ENCODE measurements at regions of chr5 and their contacts with region 1.

Region 1: DNA sequence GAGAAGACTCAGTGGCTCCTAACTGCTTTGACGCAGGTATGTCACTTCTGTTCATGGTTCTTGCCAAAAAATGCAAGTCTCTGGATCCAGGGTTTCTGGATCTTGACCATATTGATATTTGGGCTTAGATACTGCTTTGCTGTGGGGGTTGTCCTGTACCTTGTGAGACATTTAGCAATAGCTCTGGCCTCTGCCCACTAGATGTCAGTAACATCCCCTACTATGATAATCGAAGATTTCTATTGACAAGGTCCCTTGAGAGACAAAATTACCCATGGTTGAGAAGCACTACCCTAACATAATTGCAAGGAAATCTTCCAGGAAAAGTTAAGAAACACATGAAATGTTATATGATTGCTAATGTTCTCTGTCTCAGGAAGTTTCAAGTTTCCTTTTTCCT is 285.4 kb downstream of the TMEM232 start:
- DNase-seq: no peak
- ATAC-seq: no peak

Region 2: DNA sequence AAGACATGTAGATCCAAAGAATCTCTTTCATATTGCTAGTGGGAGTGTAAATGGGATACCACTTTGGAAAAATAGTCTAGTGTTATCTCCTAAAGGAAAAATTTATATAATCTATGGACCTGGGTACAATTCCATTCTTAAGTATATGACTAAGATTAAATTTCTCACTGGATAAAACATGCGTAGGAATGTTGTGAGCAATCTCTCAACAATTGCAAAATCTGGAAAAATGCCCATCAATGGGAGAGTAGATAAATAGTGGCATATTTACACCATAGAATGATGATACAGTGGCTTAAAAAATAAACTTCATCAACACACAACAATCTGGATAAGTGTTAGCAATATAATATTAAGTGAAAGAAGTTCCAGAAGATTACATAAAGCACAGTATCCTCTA is 281.8 kb before region 1 on chr5:
- intact Hi-C with region 1: no loop called
- DNase-seq: no peak
- ATAC-seq: no peak

Region 3: GRCh38 chr5:110510146-110510545 is 69.1 kb after region 1 on chr5:
- intact Hi-C with region 1: no loop called
- DNase-seq: no peak
- ATAC-seq: no peak

Region 4: DNA sequence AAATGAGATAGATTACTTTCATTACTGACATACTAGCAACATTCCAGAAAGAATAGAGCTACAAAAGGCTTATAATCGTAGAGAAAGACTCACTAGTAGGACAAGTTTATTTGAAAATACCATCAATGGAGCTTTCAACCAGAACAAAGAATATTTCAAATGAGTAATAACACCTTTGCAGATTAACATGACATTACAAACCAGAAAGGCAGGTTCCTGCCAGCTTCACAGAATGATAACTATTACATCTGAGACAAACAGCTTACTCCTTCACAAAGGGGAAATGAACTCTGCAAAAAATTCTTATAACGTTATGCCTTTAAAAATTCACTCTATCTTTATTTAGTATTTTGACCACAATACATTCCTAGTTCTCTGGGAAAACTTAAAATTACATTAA is 1875.0 kb after region 1 on chr5:
- intact Hi-C with region 1: loop called (anchors 5 kb)
- DNase-seq: no peak
- ATAC-seq: no peak